ENCODE measurements at regions of chr17 and their contacts with region 1.

Region 1: GRCh38 chr17:8383143-8383822 is at the start of gene RPL26:
- DNase-seq: peak; percentile 97
- H3K4me3 Mint-ChIP-seq: peak within 1 kb of the TSS; percentile 97
- H3K27ac Mint-ChIP-seq: peak within 1 kb of the TSS; percentile 99
- H3K4me1 Mint-ChIP-seq: peaks cover 51% of the 10 kb centered on the region
- H3K27me3 Mint-ChIP-seq: no peaks in the 10 kb centered on the region
- total RNA-seq, gene RPL26: 2,959 to 2,997 TPM

Region 2: DNA sequence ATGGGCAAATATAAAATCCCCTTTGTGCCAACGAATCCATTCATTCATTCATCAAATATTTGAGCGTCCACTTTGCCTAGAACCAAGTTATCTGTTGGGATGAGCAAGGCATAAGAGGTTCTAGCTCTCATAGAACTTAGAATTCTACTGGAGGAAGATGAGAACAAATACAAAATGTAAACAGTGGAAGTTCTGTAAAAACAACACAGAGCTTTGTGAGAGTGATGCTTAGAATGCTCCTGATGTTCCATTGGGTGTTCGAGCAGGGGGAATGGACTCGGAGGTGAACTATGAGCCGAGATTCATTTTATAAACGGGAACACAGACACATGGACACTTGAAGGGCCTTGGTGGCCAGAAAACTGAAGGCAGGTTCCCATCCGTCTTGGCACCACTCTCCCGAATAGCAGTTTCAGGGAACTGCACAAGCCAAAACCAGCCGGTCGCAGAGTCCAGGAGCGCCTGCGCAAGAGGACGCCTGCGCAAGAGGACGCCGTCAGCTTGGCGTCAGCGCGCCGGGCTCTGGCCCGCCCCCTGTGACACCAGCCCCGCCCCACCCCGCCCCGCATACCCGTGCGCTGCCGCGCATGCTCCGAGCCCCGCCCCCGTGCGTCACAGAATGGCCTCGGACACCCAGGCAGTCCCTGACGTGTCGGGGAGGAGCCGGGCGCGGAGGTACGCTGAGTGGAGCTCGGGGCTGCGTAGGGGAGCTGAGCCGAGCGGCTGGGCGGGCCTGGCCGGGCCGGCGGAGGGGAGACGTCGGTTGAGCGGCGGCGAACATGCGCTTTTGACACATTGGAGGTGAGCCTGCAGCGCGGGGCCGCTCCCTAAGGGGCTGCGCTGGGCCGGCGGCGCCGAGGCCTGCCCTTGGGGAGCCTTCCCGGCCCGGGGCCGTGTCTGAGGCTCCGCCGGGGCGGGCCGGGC is 52.2 kb after region 1 on chr17 and contains the start of gene NDEL1:
- CTCF ChIA-PET with region 1: interaction called, 13 read pairs
- POLR2A ChIA-PET with region 1: interaction called, 6 read pairs
- intact Hi-C with region 1: loop called (anchors 1 kb)
- DNase-seq: peak; percentile 99
- H3K4me3 Mint-ChIP-seq: peak within 1 kb of the TSS; percentile 92
- H3K27ac Mint-ChIP-seq: peak within 1 kb of the TSS; percentile 91
- H3K4me1 Mint-ChIP-seq: peaks cover 31% of the 10 kb centered on the region
- H3K27me3 Mint-ChIP-seq: no peaks in the 10 kb centered on the region
- total RNA-seq, gene NDEL1: 58.0 to 62.8 TPM

Region 3: DNA sequence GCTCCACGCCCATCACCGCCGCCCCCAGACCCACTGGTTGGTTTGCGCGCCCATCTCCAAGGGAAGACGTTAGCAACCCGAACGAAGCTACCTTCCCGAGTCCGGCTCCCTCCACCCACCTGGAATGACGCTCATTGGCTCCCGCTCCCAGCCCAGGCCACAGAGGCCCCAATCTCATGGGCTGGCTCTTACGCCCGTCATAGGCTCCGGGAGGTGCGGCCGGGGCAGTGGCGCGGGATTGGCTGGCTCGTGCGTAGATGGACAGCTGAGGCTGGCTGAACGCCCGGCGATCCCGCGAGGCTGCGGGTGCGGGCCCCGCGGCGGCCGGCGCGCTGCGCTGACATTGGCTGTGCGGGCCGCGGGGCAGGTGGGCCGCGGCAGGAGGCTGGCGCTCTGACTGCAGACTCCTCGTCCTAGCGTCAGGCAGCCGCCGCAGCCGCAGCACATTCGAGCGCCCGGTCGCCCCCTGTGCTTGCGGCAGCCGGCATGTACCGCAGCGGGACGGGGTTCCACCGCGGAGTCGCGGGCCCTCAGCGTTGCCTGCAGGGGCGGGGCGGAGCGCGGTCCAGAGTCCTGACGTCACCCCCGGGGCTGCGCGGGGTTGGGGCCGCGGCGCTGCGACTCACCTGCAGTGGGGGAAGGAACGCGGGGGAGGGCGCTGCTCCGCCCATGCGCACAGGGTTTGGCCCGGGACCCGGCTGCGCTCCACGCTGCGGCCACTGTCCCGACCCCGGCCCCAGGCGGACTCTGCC is 247.7 kb after region 1 on chr17:
- CTCF ChIA-PET with region 1: interaction called, 3 read pairs
- POLR2A ChIA-PET with region 1: no interaction called
- intact Hi-C with region 1: loop called (anchors 1 kb)
- DNase-seq: peak; percentile 96
- H3K4me3 Mint-ChIP-seq: peak overlapping the region; percentile 95
- H3K27ac Mint-ChIP-seq: no peak overlapping the region
- H3K4me1 Mint-ChIP-seq: peaks cover 7% of the 10 kb centered on the region
- H3K27me3 Mint-ChIP-seq: peaks cover 34% of the 10 kb centered on the region

Region 4: DNA sequence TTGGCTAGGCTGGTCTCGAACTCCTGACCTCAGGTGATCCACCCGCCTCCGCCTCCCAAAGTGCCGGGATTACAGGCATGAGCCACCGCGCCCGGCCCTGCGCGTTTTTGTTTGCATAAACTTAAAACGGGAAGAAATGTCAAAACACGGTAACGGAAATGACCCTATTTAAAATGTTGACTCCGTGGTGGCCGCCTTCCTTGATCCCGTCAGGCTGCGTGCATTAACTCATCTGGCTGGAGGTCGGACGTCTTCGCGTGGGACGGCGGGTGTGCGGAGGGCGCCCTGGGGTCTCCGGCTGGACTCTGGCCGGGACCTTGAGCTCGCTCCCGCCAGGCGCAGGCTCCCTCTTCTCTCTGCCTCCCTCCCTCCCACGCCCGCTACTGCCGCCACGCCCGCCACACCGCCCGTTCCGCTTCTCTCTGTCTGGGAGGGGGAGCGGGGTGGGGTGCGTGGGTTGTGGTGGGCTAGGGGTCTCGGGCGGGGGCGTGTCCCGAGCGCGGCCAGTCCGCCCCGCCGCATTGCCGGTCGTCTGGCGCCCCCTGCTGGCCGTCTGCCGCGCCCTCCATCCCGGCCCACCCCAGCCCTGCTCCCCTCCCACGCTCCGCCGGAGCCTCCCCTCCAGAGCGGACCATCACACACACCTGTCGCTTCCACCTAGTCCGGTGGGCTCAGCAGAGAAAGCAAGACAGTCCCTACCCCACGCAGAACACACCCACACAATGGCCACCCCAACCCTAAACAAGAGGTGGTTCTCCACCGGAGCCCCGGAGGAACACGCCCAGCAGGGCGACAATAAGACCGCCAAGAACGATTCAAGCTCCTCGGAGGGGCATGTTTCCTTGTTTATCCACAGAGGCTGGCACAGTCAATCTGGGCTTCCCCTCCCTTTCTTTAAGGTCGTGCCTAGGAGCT is 362.6 kb after region 1 on chr17:
- CTCF ChIA-PET with region 1: interaction called, 34 read pairs
- POLR2A ChIA-PET with region 1: interaction called, 6 read pairs
- intact Hi-C with region 1: loop called (anchors 1 kb)
- DNase-seq: peak; percentile 84
- H3K4me3 Mint-ChIP-seq: peak overlapping the region; percentile 80
- H3K27ac Mint-ChIP-seq: peak overlapping the region; percentile 74
- H3K4me1 Mint-ChIP-seq: peaks cover 9% of the 10 kb centered on the region
- H3K27me3 Mint-ChIP-seq: no peaks in the 10 kb centered on the region

Region 5: GRCh38 chr17:8785547-8786413 is 402.5 kb after region 1 on chr17:
- CTCF ChIA-PET with region 1: interaction called, 18 read pairs
- POLR2A ChIA-PET with region 1: no interaction called
- intact Hi-C with region 1: no loop called
- DNase-seq: peak; percentile 77
- H3K4me3 Mint-ChIP-seq: no peak overlapping the region
- H3K27ac Mint-ChIP-seq: no peak overlapping the region
- H3K4me1 Mint-ChIP-seq: peaks cover 2% of the 10 kb centered on the region
- H3K27me3 Mint-ChIP-seq: peaks cover under 1% of the 10 kb centered on the region

Measured in activated CD4-positive, alpha-beta memory T cell treated with anti-CD3 and anti-CD28 coated beads for 36 hours (primary cell).